CD8-positive, alpha-beta T cell (primary cell): ENCODE measurements at regions of chr19 and their contacts with region 1.

Region 1: DNA sequence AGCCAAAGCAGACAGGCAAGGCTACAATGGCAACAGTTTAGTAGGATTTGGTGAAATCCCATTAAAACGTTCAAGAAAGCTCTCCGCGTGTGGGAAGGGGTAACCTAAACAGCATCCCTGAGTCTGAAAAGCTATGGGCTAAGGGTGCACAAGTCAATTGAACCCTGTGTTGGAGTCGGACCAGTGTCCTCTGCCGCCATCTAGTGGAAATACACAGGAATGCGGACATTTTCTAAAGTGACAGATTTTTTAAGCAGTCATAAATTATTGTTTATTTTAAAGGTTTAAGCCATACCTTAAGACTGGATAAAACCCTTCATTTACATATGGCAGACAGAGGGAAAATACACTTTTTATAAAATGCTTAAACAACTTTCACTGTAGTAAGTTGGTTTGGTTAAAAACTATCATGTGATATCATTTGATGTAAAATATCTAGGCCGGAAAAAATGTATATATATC is 26.5 kb upstream of the LSM14A start:
- DNase-seq: peak; percentile 8 to 78 (median 54)
- ATAC-seq: peak; percentile 77
- H3K4me3 ChIP-seq: no peak overlapping the region
- H3K4me3 Mint-ChIP-seq: no peak overlapping the region
- H3K27ac ChIP-seq: no peak overlapping the region
- H3K27ac Mint-ChIP-seq: no peak overlapping the region
- H3K4me1 ChIP-seq: no peaks in the 10 kb centered on the region
- H3K4me1 Mint-ChIP-seq: no peaks in the 10 kb centered on the region
- H3K27me3 ChIP-seq: no peaks in the 10 kb centered on the region
- H3K27me3 Mint-ChIP-seq: peaks cover 1% of the 10 kb centered on the region
- CTCF ChIP-seq: peak; percentile 76

Region 2: GRCh38 chr19:33430674-33431277 is 715.0 kb before region 1 on chr19:
- CTCF ChIA-PET with region 1: no interaction called
- POLR2A ChIA-PET with region 1: no interaction called
- intact Hi-C with region 1: loop called in 1 of 2 experiments (anchors 5 kb)
- DNase-seq: peak; percentile 20 to 76 (median 61)
- ATAC-seq: peak; percentile 74
- H3K4me3 ChIP-seq: no peak overlapping the region
- H3K4me3 Mint-ChIP-seq: peak overlapping the region; percentile 68
- H3K27ac ChIP-seq: peak overlapping the region in 1 of 2 experiments; percentile 29
- H3K27ac Mint-ChIP-seq: peak overlapping the region; percentile 89
- H3K4me1 ChIP-seq: peaks cover 6% of the 10 kb centered on the region
- H3K4me1 Mint-ChIP-seq: peaks cover 12% of the 10 kb centered on the region
- H3K27me3 ChIP-seq: no peaks in the 10 kb centered on the region
- H3K27me3 Mint-ChIP-seq: no peaks in the 10 kb centered on the region
- CTCF ChIP-seq: peak; percentile 69

Region 3: GRCh38 chr19:34041925-34042521 is 103.7 kb before region 1 on chr19:
- CTCF ChIA-PET with region 1: interaction called, 34 read pairs
- POLR2A ChIA-PET with region 1: no interaction called
- intact Hi-C with region 1: loop called in 1 of 2 experiments (anchors 1 kb)
- DNase-seq: peak; percentile 36 to 79 (median 63)
- ATAC-seq: no peak
- H3K4me3 ChIP-seq: no peak overlapping the region
- H3K4me3 Mint-ChIP-seq: no peak overlapping the region
- H3K27ac ChIP-seq: no peak overlapping the region
- H3K27ac Mint-ChIP-seq: no peak overlapping the region
- H3K4me1 ChIP-seq: no peaks in the 10 kb centered on the region
- H3K4me1 Mint-ChIP-seq: no peaks in the 10 kb centered on the region
- H3K27me3 ChIP-seq: peaks cover 0 to 2% of the 10 kb centered on the region in 2 experiments
- H3K27me3 Mint-ChIP-seq: peaks cover 30% of the 10 kb centered on the region
- CTCF ChIP-seq: peak; percentile 74

Region 4: DNA sequence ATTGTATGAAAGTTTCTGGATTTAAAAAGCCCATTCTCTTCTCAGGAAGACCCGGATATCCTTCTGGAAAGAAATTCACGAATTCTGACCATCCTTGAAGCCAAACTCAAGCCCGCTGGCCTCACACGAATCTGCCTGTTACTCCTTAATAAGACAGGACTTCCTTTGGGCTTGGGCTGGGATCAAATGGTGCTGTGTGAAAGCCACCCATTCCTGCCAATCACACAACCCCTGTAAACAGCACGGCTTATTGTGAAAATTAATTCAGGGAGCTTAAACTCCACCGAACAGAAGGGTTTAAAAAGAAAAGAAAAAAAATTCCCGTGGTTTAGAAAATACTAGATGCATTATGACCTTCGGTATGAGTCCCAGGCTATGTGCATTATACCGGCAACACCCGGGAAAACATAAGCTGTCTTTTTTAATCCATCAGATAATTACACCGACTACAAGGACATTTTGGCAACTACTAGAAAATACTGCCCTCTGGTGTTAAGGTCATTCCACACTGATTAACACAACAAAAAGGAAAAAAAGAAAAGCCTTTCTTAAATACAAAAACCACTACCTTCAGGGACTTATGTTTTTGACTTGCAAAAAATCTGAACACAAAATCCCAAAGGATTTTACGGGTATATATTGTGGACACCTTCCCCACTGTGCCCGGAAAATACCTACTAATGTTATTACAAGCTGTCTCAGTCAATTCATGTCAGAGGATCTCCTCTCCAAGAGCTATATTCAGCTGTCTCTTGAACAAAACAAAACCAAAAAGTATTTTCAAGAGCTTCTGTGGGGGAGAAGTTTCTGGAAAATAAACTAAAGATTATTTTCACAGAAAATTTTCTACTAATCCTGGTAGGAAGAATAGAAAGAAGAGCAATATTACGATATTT is 49.5 kb before region 1 on chr19:
- CTCF ChIA-PET with region 1: interaction called, 13 read pairs
- POLR2A ChIA-PET with region 1: no interaction called
- intact Hi-C with region 1: no loop called
- DNase-seq: peak in 2 of 9 experiments; percentile 38 to 45
- ATAC-seq: no peak
- H3K4me3 ChIP-seq: no peak overlapping the region
- H3K4me3 Mint-ChIP-seq: no peak overlapping the region
- H3K27ac ChIP-seq: no peak overlapping the region
- H3K27ac Mint-ChIP-seq: no peak overlapping the region
- H3K4me1 ChIP-seq: no peaks in the 10 kb centered on the region
- H3K4me1 Mint-ChIP-seq: no peaks in the 10 kb centered on the region
- H3K27me3 ChIP-seq: no peaks in the 10 kb centered on the region
- H3K27me3 Mint-ChIP-seq: peaks cover 18% of the 10 kb centered on the region
- CTCF ChIP-seq: peak; percentile 66

Region 5: DNA sequence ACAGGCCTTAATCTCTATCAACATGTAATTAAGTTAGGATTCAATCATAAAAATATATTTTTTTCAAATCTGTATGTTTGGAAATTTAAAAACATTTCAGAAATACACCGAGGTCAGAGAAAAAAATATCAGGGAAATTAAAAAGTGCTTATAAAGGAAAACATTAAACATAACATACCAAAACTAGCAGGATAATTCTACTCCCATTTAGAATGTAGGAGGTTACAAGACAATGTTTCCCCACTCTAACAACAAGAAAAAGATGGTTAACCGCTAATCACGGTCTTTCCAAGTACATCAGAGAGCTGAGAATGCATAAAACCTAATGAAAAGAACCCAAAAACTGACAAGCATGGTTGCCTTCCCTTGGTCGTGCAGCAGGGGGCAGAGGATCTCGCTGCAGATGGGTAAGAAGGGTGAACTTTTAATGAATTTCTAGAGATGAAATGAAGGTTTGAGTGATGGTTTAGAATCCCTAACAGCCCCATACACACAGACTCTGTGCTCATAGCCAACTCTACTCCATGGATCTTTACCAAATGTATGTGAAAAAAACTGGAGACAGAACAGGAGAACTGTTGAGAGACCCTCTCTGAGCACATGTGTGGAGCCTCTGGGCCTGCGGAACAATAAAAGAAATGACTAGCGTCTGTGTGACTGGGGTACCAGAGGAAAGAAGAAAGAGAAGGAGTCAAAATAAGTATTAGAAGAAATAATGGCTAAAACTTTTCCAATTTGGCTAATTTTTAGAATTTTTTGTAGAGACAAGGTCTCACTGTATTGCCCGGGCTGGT is 24.7 kb before region 1 on chr19:
- CTCF ChIA-PET with region 1: interaction called, 53 read pairs
- POLR2A ChIA-PET with region 1: no interaction called
- intact Hi-C with region 1: loop called (anchors 1 kb)
- DNase-seq: peak; percentile 26 to 72 (median 49)
- ATAC-seq: peak; percentile 71
- H3K4me3 ChIP-seq: no peak overlapping the region
- H3K4me3 Mint-ChIP-seq: no peak overlapping the region
- H3K27ac ChIP-seq: no peak overlapping the region
- H3K27ac Mint-ChIP-seq: no peak overlapping the region
- H3K4me1 ChIP-seq: peaks cover 11% of the 10 kb centered on the region
- H3K4me1 Mint-ChIP-seq: peaks cover 17% of the 10 kb centered on the region
- H3K27me3 ChIP-seq: no peaks in the 10 kb centered on the region
- H3K27me3 Mint-ChIP-seq: no peaks in the 10 kb centered on the region
- CTCF ChIP-seq: peak; percentile 73

Region 6: DNA sequence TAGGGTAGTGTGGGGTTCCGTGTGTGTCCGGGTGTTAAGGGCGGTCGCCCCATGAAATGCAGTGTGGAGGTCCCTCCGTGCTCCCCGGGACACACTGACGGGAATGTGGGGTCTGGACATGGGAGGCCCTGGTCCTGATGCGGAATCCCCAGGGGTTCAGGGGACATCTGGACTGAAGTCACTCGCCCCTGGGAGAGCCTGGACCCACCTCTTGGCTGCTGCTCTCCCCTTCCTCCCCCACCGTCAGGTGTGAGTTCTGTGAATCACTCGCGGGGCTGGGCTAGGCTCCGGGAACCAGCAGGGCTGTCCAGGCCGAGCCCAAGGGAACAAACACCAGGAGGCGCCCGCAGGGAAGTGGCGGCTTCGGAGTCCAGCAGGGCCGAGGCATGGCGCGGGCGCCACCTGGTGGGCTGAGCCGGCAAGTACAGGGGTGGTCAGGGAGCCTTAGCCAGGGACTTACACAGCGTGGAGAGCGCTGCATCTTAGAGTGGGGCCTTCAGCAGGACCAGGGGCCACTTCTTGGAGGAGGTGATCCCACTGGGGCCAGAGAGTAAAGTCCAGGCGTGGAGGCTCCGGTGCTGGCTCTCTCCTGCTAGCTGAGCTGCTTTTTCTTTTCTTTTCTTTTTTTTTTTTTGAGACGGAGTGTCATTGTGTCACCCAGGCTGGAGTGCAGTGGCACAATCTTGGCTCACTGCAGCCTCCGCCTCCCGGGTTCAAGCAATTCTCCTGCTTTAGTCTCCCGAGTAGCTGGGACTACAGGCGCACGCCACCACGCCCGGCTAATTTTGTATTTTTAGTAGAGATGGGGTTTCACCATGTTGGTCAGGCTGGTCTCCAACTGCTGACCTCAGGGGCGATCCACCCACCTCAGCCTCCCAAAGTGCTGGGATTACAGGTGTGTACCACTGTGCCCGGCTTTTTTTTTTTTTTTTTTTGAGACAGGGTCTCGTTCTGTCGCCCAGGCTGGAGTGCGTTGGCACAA is 355.9 kb after region 1 on chr19:
- CTCF ChIA-PET with region 1: no interaction called
- POLR2A ChIA-PET with region 1: no interaction called
- intact Hi-C with region 1: no loop called
- DNase-seq: peak; percentile 70 to 90 (median 83)
- ATAC-seq: peak; percentile 76
- H3K4me3 ChIP-seq: peak overlapping the region; percentile 4 to 10
- H3K4me3 Mint-ChIP-seq: peak overlapping the region; percentile 22
- H3K27ac ChIP-seq: no peak overlapping the region
- H3K27ac Mint-ChIP-seq: no peak overlapping the region
- H3K4me1 ChIP-seq: peaks cover 8% of the 10 kb centered on the region
- H3K4me1 Mint-ChIP-seq: peaks cover 7% of the 10 kb centered on the region
- H3K27me3 ChIP-seq: peaks cover 0 to 14% of the 10 kb centered on the region in 2 experiments
- H3K27me3 Mint-ChIP-seq: peaks cover 11% of the 10 kb centered on the region
- CTCF ChIP-seq: peak; percentile 90